Dorsolateral prefrontal cortex (tissue), 120 donors: ENCODE measurements at regions of chr20 and their contacts with region 1.

Region 1: GRCh38 chr20:4613718-4614620 is 107.7 kb upstream of the PRND start:
- DNase-seq: peak; percentile 65 to 94 (median 77)
- H3K4me3 ChIP-seq: peak overlapping the region in 27 of 59 donors; percentile 2 to 54 (median 24)
- H3K27ac ChIP-seq: peak overlapping the region; percentile 51 to 96 (median 86)
- H3K27me3 ChIP-seq: no peaks in the 10 kb centered on the region
- CTCF ChIP-seq: peak; percentile 20 to 80 (median 62)

Region 2: DNA sequence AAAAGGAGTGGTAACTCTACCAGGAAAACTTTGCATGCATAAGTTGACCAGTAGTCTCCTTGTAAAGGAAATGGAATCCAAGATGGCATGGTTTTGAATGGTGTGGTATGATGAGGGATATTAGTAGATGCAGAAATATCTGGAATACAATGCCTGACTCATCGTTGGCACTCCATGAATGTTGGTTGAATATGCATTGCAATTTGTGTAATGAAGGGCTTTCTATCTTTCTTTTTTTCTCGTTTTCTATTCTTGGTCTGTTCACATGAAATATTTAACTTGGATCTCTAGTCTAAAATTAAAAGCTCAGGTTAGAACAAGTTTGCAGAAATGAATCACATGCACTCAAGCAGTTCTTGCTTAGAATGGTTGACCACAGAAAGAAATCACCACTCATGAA is 169.6 kb before region 1 on chr20:
- intact Hi-C with region 1: no loop called
- DNase-seq: no peak
- H3K4me3 ChIP-seq: no peak overlapping the region
- H3K27ac ChIP-seq: peak overlapping the region in 4 of 59 donors; percentile 9 to 33 (median 19)
- H3K27me3 ChIP-seq: peaks cover 0 to 8% (median 0%) of the 10 kb centered on the region in 45 donors
- CTCF ChIP-seq: no peak

Region 3: DNA sequence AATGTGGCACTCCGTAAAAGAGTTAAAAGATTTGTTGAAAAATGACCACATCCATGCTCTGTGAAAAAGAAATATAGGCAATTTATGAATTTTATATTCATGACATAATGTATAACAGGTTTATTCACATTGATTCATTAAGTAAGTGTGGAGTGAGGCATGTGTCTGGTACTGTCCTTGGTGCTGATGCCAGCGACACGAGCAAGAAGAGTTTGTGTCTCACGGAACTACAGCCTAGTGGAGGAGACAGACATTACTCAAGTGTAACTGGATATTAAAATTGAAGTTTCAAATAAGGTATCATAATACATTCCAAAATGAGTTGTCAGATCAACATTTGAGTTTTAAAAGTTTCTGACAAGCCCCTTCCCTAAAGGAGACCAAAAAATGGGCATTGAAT is 50.4 kb before region 1 on chr20:
- intact Hi-C with region 1: no loop called
- DNase-seq: no peak
- H3K4me3 ChIP-seq: no peak overlapping the region
- H3K27ac ChIP-seq: no peak overlapping the region
- H3K27me3 ChIP-seq: peaks cover 0 to 4% (median 0%) of the 10 kb centered on the region in 45 donors
- CTCF ChIP-seq: peak in 1 of 56 donors; percentile 13

Region 4: GRCh38 chr20:4661191-4661590 is 47.2 kb after region 1 on chr20:
- intact Hi-C with region 1: no loop called
- DNase-seq: no peak
- H3K4me3 ChIP-seq: no peak overlapping the region
- H3K27ac ChIP-seq: no peak overlapping the region
- H3K27me3 ChIP-seq: no peaks in the 10 kb centered on the region
- CTCF ChIP-seq: no peak

Region 5: DNA sequence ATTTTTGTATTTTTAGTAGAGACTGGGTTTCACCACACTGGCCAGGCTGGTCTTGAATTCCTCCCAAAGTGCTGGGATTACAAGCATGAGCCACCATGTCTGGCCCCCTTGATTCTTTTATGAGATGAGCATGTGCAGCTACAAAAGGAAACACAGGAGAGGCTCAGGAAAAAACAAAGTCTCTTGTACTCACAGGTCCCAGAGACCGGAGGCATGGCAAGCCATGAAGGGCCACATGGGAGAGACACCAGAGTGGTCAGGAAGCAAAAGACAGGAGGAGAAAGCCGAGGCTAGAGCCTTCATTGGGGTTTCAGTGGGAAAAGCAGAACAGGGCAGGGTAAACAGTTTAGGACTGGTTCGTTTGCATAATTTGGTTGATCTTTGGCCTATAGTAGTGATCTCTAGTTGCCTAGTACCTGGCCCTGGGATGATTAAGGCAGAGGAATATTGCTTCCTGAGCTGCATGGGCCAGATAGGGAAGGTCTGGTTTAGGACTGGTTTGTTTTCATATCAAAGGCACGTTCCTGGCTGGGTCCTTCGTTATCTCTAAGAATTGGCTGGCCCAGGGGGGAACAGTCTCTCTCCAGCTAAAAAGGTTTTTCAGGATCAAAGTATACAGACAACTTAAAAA is 59.5 kb after region 1 on chr20:
- intact Hi-C with region 1: no loop called
- DNase-seq: no peak
- H3K4me3 ChIP-seq: no peak overlapping the region
- H3K27ac ChIP-seq: no peak overlapping the region
- H3K27me3 ChIP-seq: no peaks in the 10 kb centered on the region
- CTCF ChIP-seq: no peak

Region 6: GRCh38 chr20:4684837-4685413 is 71.0 kb after region 1 on chr20:
- intact Hi-C with region 1: loop called in 1 of 2 experiments (anchors 5 kb)
- DNase-seq: peak in 2 of 10 donors; percentile 34 to 36
- H3K4me3 ChIP-seq: peak overlapping the region in 22 of 59 donors; percentile 73 to 97 (median 88)
- H3K27ac ChIP-seq: peak overlapping the region; percentile 68 to 100 (median 99)
- H3K27me3 ChIP-seq: no peaks in the 10 kb centered on the region
- CTCF ChIP-seq: no peak

Region 7: DNA sequence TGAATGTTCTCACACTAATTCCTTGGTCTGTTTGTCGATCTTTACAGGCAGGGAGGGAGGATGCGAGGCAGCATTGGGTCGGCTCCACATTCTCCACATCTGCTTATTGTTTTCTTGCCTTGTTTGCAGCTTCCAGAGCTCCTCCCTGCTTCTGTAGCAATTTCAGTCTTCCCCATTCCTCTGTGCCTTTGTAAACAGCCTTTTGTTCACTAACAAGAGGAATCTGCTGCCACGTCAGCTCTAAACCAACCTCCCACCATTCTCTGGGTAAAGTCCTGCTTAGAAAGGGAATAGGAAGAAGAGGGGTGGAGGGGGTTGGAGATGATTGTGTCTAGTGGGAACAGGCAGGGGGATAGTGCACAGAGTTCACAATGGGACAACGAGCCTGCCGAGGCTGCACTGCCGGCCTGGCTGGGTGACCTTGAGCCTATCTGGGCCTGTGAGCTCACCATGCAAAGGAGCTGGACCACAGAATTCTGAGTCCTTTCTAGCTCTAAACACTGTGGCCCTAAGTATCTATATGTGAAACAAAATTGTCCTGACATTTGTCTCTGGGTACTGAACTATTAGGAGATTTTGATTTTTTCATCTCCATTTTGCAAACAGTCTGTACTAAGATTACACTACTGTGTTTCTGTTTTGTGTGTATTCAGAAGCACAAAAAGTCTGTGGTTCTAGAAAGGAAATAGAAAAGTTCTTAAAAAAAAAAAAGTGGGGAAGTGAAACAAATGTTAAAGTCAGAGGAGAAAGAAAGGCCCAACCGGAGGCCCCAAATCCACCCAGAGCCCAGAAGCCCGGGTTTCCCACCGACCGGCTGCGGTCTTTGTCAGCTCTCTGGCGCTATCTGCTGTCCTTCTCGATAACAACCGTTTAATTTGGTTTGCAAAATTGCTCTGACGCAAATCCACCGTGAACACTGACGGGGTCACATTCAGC is 106.3 kb after region 1 on chr20:
- intact Hi-C with region 1: loop called (anchors 1 kb)
- DNase-seq: peak; percentile 56 to 86 (median 82)
- H3K4me3 ChIP-seq: peak overlapping the region in 25 of 59 donors; percentile 0 to 50 (median 14)
- H3K27ac ChIP-seq: peak overlapping the region; percentile 72 to 98 (median 95)
- H3K27me3 ChIP-seq: no peaks in the 10 kb centered on the region
- CTCF ChIP-seq: peak; percentile 65 to 94 (median 86)